Cardiac septum (tissue), 1 donor: ENCODE measurements at regions of chr11 and their contacts with region 1.

Region 1: GRCh38 chr11:120801801-120802689 is 221.9 kb upstream of the TBCEL start:
- DNase-seq: no peak

Region 2: DNA sequence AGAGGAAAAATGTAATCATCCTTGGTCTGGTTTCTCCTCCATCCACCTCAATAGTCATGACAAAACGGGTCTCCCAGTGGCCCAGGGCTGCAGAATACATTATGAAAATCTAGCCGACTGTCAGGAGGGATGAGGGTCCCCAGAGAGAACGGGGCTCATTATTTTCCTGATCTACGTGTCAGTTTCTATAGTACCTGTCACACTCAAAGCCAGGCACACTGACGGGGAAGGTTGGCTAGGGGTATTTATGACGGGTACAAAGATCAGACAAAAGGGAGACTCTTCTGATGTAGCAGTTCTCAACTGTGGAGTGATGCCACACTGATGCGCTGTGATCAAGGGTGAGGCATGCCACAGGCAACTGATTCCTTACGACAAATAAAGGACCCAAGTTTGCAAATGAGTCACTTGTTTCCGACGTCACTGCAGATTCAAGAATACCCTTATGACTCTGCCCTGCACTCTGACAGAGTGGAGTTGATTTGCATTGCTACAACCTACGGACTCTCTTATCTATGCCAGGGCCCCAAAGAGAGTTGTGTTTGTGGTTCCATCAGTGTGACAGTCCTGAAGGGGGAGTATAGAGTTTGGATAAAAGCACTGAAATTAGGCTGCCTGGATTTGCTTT is 33.7 kb after region 1 on chr11:
- intact Hi-C with region 1: loop called (anchors 1 kb)
- DNase-seq: no peak